WTC11 (cell line): ENCODE measurements at regions of chr16 and their contacts with region 1.

Region 1: DNA sequence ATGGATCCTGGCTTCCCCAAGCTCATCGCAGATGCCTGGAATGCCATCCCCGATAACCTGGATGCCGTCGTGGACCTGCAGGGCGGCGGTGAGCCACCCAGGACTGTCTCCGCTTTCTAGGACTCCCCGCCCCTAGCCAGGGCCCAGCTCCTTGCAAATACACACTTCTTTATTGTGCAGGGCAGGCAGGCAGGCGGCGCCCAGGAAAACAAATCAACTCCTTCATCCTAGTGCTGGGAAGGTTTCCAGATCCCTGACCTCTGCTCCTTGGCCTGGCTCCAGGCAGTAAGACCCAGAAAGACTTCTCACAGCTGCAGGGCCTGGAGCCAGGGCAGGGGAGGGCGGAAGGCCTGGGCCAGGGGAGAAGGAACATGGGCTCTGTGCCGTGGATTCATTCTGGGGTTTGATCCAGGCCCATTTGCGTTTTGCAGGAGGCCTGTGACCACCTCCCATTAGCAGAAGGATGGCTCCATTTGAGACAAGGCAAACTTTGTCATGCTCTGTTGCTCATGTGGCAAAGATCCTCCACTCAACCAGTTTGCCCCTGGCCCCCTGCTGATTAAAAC is 6.0 kb upstream of the LPCAT2 start:
- DNase-seq: no peak
- ATAC-seq: peak; percentile 69
- H3K4me3 Mint-ChIP-seq: no peak overlapping the region
- H3K27ac Mint-ChIP-seq: no peak overlapping the region
- H3K4me1 Mint-ChIP-seq: peaks cover 8% of the 10 kb centered on the region
- H3K27me3 Mint-ChIP-seq: no peaks in the 10 kb centered on the region
- CTCF ChIP-seq: no peak

Region 2: DNA sequence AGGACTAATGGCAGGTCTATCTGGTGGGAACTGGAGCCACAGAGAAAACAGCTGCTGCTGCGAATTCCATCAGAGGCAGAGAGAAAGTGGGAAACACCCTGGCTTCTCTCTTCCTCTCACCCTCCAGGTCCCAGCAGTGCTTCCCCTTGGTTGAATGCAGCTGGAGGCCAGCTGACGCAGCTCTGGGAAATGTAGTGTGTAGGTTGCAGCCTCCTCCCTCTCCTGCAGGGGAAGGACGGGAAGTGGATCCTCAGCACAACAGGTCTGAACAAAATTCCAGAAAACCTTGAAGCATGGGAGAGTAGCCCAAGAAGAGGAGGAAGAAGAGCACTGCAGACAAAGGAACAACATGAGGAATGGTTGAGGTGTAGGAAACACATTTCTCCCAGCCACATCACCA is 91.7 kb before region 1 on chr16:
- CTCF ChIA-PET with region 1: no interaction called
- POLR2A ChIA-PET with region 1: no interaction called
- DNase-seq: no peak
- ATAC-seq: 0 out of 2 replicates have a peak, but pooled peaks have one; percentile 24
- H3K4me3 Mint-ChIP-seq: no peak overlapping the region
- H3K27ac Mint-ChIP-seq: no peak overlapping the region
- H3K4me1 Mint-ChIP-seq: peaks cover 3% of the 10 kb centered on the region; the same call in 1 of the 2 replicates
- H3K27me3 Mint-ChIP-seq: no peaks in the 10 kb centered on the region; the same call in 1 of the 2 replicates
- CTCF ChIP-seq: no peak

Region 3: GRCh38 chr16:55471448-55472097 is 31.3 kb before region 1 on chr16:
- CTCF ChIA-PET with region 1: interaction called, 16 read pairs
- POLR2A ChIA-PET with region 1: no interaction called
- DNase-seq: no peak
- ATAC-seq: no peak
- H3K4me3 Mint-ChIP-seq: no peak overlapping the region
- H3K27ac Mint-ChIP-seq: no peak overlapping the region
- H3K4me1 Mint-ChIP-seq: peaks cover 23% of the 10 kb centered on the region
- H3K27me3 Mint-ChIP-seq: peaks cover 66% of the 10 kb centered on the region
- CTCF ChIP-seq: no peak

Region 4: GRCh38 chr16:55480228-55480661 is 22.6 kb before region 1 on chr16:
- CTCF ChIA-PET with region 1: interaction called, 16 read pairs
- POLR2A ChIA-PET with region 1: no interaction called
- DNase-seq: peak; percentile 44
- ATAC-seq: peak; percentile 43
- H3K4me3 Mint-ChIP-seq: peak overlapping the region; percentile 90
- H3K27ac Mint-ChIP-seq: no peak overlapping the region
- H3K4me1 Mint-ChIP-seq: peaks cover 27% of the 10 kb centered on the region
- H3K27me3 Mint-ChIP-seq: peaks cover 61% of the 10 kb centered on the region
- CTCF ChIP-seq: no peak

Region 5: DNA sequence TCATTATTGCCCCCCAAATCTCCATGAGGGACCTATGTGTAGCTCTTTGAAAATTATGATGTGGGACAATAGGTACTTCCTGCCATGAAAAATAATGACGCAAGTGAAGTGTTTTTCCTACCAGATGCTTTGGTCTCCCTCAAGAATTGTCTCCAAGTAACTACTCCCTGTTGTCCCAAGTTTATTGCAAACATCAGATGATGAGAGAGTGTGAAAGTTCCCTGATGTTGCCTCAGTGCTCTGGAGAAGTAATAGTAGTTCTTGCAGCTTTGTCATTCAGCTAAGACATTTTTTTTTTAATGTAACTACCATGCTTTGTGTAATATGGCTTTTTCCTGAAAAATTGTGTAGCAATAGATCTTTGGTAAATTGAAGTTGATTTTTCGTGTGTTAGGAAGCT is 26.1 kb after region 1 on chr16:
- CTCF ChIA-PET with region 1: interaction called, 17 read pairs
- POLR2A ChIA-PET with region 1: no interaction called
- DNase-seq: no peak
- ATAC-seq: no peak
- H3K4me3 Mint-ChIP-seq: no peak overlapping the region
- H3K27ac Mint-ChIP-seq: no peak overlapping the region
- H3K4me1 Mint-ChIP-seq: peaks cover 5% of the 10 kb centered on the region
- H3K27me3 Mint-ChIP-seq: no peaks in the 10 kb centered on the region
- CTCF ChIP-seq: no peak

Region 6: DNA sequence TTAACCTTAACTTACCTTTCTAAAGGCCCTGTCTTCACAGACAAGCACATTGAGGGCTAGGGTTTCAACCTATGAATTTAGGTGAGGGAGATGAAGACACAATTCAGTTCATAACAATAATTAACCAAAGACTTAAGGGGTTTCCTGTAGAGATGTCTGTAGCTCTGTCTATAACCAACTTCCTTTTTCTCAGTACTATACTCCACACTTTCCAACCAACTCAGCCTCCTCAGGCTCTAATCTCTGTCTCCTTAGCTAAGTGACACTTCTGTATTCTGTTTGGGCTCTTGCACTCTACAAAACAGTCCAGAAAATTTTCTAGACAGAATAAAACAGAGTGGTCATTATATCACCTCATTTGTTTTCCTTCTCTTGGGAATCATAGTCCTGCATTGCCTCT is 89.4 kb after region 1 on chr16:
- CTCF ChIA-PET with region 1: no interaction called
- POLR2A ChIA-PET with region 1: no interaction called
- DNase-seq: no peak
- ATAC-seq: no peak
- H3K4me3 Mint-ChIP-seq: no peak overlapping the region
- H3K27ac Mint-ChIP-seq: no peak overlapping the region
- H3K4me1 Mint-ChIP-seq: peaks cover 17% of the 10 kb centered on the region
- H3K27me3 Mint-ChIP-seq: no peaks in the 10 kb centered on the region; the same call in 1 of the 2 replicates
- CTCF ChIP-seq: no peak